ENCODE measurements at regions of chr6 and their contacts with region 1.

Region 1: DNA sequence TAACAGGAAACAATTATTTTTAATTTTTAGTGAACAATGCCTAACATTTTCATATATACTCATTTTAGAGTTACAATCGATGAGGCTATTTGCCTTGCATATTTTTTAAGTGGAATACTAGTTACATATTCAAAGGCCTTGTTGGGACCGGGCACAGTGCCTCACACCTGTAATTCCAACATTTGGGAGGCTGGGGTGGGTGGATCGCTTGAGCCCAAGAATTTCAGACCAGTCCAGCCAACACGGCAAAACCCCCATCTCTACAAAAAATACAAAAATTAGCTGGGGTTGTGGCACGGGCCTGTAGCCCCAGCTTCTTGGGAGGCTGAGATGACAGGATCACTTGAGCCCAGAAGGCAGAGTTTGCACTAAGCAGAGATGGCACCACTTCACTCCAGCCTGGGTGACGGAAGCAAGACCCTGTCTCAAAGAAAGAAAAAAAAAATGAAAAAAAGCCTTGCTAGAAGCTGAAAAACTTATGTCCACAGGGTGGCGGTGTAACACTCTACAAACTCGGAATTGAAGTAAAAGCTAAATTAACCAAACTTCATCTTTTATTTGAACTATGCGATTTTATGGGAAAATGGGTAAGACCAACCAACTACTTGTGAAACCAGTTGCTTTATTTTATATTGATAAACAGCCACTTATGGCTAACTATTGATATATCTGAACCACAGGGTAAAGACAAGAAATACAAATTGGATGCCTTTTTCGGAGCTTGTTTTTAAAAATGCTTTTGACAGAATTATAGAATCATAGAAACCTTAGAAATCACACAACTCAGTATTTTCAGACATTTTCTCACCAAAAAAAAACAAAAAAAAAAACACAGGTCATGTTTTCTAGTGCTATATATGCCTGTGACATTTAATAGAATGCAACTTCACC is 24.1 kb upstream of the ROS1 start:
- DNase-seq: no peak
- H3K4me3 ChIP-seq: no peak overlapping the region
- CTCF ChIP-seq: peak; percentile 36

Region 2: GRCh38 chr6:117346142-117346930 is 103.5 kb before region 1 on chr6:
- CTCF ChIA-PET with region 1: interaction called, 10 read pairs
- POLR2A ChIA-PET with region 1: no interaction called
- DNase-seq: no peak
- H3K4me3 ChIP-seq: no peak overlapping the region; the same call in 1 of the 2 replicates
- CTCF ChIP-seq: no peak

Region 3: DNA sequence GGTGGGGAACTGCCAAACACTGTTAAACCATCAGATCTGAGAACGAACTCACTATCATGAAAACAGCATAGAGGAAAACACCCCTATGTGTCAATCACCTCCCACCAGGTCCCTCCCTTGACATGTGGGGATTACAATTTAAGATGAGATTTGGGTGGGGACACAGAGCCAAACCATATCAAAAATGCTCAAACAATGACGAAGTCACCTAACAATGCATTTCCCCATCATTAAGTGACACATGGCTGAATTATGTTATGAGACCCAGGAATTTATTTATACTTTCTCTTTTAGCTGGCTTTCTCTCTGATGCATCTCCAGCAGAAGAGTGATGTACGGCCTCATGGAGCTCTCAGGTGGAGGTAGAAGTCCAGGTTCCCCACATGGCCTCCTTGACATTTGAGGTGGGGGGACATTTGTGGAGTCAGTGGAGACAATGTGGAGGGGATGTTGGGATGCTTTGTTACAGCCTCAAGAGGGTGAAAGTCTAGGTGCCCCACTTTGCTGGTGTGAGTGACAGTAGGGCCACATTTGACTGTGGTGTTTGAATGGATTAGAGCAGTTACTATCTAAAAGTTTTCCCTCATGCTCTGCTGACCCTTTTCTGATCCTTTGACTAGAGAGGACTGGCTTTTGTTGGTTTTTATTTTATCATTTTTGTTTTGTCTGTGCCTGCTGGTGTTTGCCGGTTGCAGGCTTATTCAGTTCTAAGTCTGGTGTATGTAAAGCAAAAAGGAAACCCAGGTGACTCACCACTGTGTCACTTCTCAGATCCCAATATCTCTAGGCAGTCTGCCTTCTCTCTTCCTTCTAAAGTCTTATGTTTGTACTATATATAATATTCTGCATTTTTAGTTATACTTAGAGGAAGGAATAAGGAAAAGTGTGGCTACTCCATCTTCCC is 14.2 kb after region 1 on chr6:
- CTCF ChIA-PET with region 1: interaction called, 22 read pairs
- POLR2A ChIA-PET with region 1: interaction called, 3 read pairs
- DNase-seq: no peak
- H3K4me3 ChIP-seq: peak overlapping the region; percentile 21
- CTCF ChIP-seq: no peak

Region 4: GRCh38 chr6:117531346-117531745 is 81.6 kb after region 1 on chr6:
- CTCF ChIA-PET with region 1: interaction called, 16 read pairs
- POLR2A ChIA-PET with region 1: no interaction called
- DNase-seq: no peak
- H3K4me3 ChIP-seq: no peak overlapping the region
- CTCF ChIP-seq: no peak

Region 5: GRCh38 chr6:117561128-117561527 is 111.3 kb after region 1 on chr6:
- CTCF ChIA-PET with region 1: interaction called, 273 read pairs
- POLR2A ChIA-PET with region 1: no interaction called
- DNase-seq: no peak
- H3K4me3 ChIP-seq: no peak overlapping the region
- CTCF ChIP-seq: no peak

Region 6: GRCh38 chr6:117585647-117586046 is 135.9 kb after region 1 on chr6:
- CTCF ChIA-PET with region 1: interaction called, 11 read pairs
- POLR2A ChIA-PET with region 1: no interaction called
- DNase-seq: no peak
- H3K4me3 ChIP-seq: no peak overlapping the region
- CTCF ChIP-seq: no peak

Region 7: GRCh38 chr6:117602151-117602898 is 152.5 kb after region 1 on chr6 and contains the start of gene GOPC:
- CTCF ChIA-PET with region 1: interaction called, 205 read pairs
- POLR2A ChIA-PET with region 1: interaction called, 13 read pairs
- DNase-seq: peak; percentile 88
- H3K4me3 ChIP-seq: peak within 1 kb of the TSS; percentile 91
- CTCF ChIP-seq: peak; percentile 42

Region 8: DNA sequence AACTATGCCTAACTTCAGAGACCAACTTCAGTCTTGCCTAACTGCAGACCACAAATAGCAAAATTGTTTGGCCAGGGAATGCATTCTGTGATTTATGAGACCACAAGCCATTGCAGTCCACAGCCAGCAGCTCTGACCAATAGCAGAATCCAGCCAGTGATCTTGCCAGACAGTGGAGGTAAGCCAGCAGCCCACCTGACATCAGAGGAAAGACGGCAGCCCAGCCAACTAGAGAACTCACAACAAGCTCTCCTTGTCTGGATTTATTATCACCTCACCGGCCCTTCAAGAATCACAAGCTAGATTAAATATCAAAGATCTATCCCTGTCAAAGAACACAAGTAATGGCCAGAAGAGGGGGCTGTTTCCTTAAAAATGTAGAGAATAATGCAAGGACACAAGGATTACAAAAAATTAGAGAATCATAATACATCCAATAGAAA is 390.8 kb after region 1 on chr6:
- CTCF ChIA-PET with region 1: no interaction called
- POLR2A ChIA-PET with region 1: no interaction called
- DNase-seq: no peak
- H3K4me3 ChIP-seq: no peak overlapping the region
- CTCF ChIP-seq: no peak